Activated T-helper 2 cell treated with anti-CD3 and anti-CD28 coated beads, Interferon-gamma antibody, Interleukin-2, Interleukin-4, amounts not matched to agents 10 μg/mL and 5 μg/mL and 100 μg/mL, durations not matched to agents 14 hours and 24 hours and 36 hours (primary cell): ENCODE measurements at regions of chr3 and their contacts with region 1.

Region 1: DNA sequence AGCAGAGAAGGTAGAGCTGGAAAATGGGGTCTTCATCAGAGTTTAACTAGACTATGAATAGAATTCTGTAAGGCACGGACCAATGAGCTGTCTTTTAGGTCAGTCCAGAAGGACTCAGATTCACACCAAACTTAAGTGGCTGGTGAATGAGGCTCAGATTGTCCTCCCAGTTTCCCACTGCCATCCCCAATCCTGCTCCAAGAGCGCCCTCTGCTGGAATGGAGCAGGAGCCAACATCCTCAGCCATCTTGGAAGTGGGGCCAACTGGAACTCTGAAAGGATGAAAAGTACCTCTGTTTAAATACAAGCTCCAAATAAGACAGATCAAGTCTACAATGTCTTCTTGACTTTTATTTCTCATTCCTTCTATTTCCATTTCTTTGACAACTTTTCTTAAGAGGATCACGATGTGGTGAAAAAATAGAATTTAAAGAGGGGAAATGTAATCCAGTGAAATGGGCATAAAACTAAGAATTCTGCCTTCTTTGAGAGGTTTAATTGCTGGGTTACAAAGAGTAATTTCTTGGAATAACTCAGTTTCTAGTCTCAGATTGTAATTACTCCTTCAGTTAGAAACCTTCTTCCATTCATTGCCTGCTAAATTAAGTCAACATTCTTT is 217.1 kb upstream of the TPRG1 start:
- DNase-seq: peak; percentile 60
- H3K4me3 Mint-ChIP-seq: no peak overlapping the region
- H3K27ac Mint-ChIP-seq: no peak overlapping the region
- H3K4me1 Mint-ChIP-seq: peaks cover 32% of the 10 kb centered on the region
- H3K27me3 Mint-ChIP-seq: peaks cover 3% of the 10 kb centered on the region

Region 2: GRCh38 chr3:188154014-188154808 is 800.5 kb before region 1 on chr3 and contains the start of gene LPP:
- intact Hi-C with region 1: loop called (anchors 10 kb)
- DNase-seq: peak; percentile 87
- H3K4me3 Mint-ChIP-seq: peak within 1 kb of the TSS; percentile 91
- H3K27ac Mint-ChIP-seq: peak within 1 kb of the TSS; percentile 93
- H3K4me1 Mint-ChIP-seq: peaks cover 63% of the 10 kb centered on the region
- H3K27me3 Mint-ChIP-seq: no peaks in the 10 kb centered on the region
- total RNA-seq, gene LPP: 54.5 and 59.0 TPM in 2 replicates

Region 3: GRCh38 chr3:188309437-188310269 is 645.0 kb before region 1 on chr3:
- intact Hi-C with region 1: loop called (anchors 5 kb)
- DNase-seq: peak; percentile 38
- H3K4me3 Mint-ChIP-seq: peak overlapping the region; percentile 48
- H3K27ac Mint-ChIP-seq: peak overlapping the region; percentile 79
- H3K4me1 Mint-ChIP-seq: peaks cover 25% of the 10 kb centered on the region
- H3K27me3 Mint-ChIP-seq: peaks cover under 1% of the 10 kb centered on the region

Region 4: DNA sequence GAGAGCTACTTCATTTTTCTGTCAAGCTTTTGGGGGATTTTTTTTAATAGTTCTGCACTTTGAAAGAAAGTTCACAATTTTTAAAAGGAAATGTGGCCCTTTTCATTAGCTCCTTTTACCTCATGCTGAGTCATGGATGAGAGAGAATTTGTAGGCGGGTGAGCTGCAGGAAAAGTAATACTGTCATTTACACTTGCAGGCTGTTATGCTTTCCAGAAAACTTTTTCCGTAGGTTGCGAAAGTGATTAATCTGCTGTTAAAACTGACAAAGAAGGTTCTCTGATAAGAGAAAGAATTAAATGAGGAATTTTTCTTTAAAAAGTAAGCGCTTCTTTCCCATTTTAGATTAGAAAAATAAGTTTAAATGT is 370.6 kb before region 1 on chr3:
- intact Hi-C with region 1: loop called (anchors 5 kb)
- DNase-seq: no peak
- H3K4me3 Mint-ChIP-seq: peak overlapping the region; percentile 13
- H3K27ac Mint-ChIP-seq: peak overlapping the region; percentile 86
- H3K4me1 Mint-ChIP-seq: peaks cover 30% of the 10 kb centered on the region
- H3K27me3 Mint-ChIP-seq: no peaks in the 10 kb centered on the region

Region 5: DNA sequence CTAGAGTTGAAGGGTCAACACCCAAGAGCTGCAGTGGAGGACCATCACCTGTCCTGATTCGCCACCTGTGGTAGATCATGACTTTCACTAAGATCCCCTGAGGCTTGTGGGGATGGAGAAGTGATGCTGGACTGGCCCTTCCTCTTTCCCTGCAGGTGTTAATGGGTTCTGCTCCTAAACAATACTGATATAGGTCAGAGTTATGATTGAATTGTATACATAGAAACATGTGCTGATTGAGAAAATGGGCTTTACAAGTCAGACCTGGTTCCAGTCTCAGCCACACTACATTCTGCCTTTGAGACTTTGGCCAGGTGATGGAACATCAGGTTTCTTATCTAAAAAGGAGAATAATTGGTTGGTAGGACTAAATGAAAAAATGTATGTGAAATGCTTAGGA is 201.8 kb before region 1 on chr3:
- intact Hi-C with region 1: loop called (anchors 2 kb)
- DNase-seq: no peak
- H3K4me3 Mint-ChIP-seq: no peak overlapping the region
- H3K27ac Mint-ChIP-seq: no peak overlapping the region
- H3K4me1 Mint-ChIP-seq: peaks cover 19% of the 10 kb centered on the region
- H3K27me3 Mint-ChIP-seq: peaks cover 3% of the 10 kb centered on the region

Region 6: DNA sequence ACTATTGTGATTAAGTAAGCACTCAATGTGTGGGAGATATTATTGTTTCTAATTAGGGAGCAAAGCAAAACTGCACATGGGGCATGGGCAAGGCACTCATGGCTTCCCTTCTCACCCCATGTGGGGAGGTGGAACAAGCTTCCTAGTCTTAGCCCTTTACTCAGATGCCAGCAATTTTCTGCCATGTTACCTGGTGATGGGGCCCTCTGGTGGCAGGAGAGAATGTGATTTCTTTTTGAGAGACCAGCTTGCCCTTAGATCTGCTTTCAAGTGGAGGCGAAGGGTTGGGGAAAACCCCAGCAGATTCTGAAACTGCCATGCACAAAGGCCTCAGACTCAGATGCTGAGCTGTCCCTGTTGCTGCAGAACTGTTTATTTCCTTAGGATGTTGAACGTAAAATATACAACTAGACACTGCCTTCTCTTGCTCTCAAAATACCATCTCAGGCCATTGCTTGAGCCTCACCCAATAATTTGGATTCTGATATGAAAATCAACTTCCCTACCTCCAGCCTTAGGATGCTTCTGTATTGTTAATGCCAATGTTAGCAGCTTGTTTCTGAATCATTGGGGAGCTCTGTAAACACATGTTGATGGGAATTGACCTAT is 86.9 kb after region 1 on chr3:
- intact Hi-C with region 1: loop called (anchors 2 kb)
- DNase-seq: peak; percentile 76
- H3K4me3 Mint-ChIP-seq: no peak overlapping the region
- H3K27ac Mint-ChIP-seq: peak overlapping the region; percentile 25
- H3K4me1 Mint-ChIP-seq: peaks cover 51% of the 10 kb centered on the region
- H3K27me3 Mint-ChIP-seq: no peaks in the 10 kb centered on the region

Region 7: DNA sequence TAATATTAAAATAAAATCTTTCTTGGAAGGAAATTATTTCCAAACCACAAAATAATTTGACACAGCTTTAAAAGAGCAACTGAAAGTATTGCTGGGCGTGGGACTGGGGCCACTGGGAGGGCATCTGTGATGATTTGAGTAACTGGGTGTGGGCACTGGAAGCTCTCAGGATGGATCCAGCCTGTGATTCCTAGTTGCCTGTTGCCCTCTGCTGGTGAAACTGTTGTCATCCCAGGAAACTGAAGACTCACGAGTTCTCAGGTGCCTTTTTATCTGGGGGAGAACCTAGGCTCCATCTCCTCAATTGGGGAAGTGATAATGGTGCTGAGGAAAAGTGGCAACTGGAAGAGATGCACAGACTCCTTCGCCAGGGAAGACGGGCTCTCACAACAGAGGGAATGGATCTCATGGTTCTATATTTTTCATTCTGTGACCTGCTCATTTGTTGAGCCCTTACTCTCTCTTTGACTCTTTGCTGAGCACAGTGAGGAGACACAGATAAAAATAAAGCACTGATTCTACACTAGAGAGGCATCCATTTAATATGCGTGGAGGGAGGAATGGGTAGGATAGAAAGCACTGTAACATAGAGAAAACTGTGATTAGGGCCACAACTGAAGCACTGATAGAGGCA is 278.6 kb after region 1 on chr3:
- intact Hi-C with region 1: loop called (anchors 10 kb)
- DNase-seq: no peak
- H3K4me3 Mint-ChIP-seq: no peak overlapping the region
- H3K27ac Mint-ChIP-seq: no peak overlapping the region
- H3K4me1 Mint-ChIP-seq: peaks cover 48% of the 10 kb centered on the region
- H3K27me3 Mint-ChIP-seq: peaks cover 18% of the 10 kb centered on the region